Transverse colon (tissue), 4 donors: ENCODE measurements at regions of chr1 and their contacts with region 1.

Region 1: GRCh38 chr1:156659994-156660751 is 17.0 kb downstream of the NES start:
- DNase-seq: peak; percentile 94
- H3K4me3 ChIP-seq: peak overlapping the region in 2 of 4 donors; percentile 26 to 30
- H3K27ac ChIP-seq: peak overlapping the region; percentile 72 to 89 (median 87)
- H3K4me1 ChIP-seq: peaks cover 41 to 78% (median 68%) of the 10 kb centered on the region in 4 donors
- H3K27me3 ChIP-seq: no peaks in the 10 kb centered on the region
- CTCF ChIP-seq: peak; percentile 97 to 99 (median 98)
- EP300 ChIP-seq: no peak
- POLR2A ChIP-seq: peak; percentile 30

Region 2: GRCh38 chr1:156623946-156624813 is 36.0 kb before region 1 on chr1:
- in situ Hi-C with region 1: no loop called
- intact Hi-C with region 1: loop called (anchors 5 kb)
- DNase-seq: peak; percentile 47
- H3K4me3 ChIP-seq: peak overlapping the region in 3 of 4 donors; percentile 8 to 44 (median 32)
- H3K27ac ChIP-seq: no peak overlapping the region
- H3K4me1 ChIP-seq: peaks cover 16 to 25% (median 22%) of the 10 kb centered on the region in 4 donors
- H3K27me3 ChIP-seq: peaks cover 92% of the 10 kb centered on the region
- CTCF ChIP-seq: peak in 4 of 5 experiments; percentile 23 to 28 (median 27)
- EP300 ChIP-seq: no peak
- POLR2A ChIP-seq: no peak

Region 3: DNA sequence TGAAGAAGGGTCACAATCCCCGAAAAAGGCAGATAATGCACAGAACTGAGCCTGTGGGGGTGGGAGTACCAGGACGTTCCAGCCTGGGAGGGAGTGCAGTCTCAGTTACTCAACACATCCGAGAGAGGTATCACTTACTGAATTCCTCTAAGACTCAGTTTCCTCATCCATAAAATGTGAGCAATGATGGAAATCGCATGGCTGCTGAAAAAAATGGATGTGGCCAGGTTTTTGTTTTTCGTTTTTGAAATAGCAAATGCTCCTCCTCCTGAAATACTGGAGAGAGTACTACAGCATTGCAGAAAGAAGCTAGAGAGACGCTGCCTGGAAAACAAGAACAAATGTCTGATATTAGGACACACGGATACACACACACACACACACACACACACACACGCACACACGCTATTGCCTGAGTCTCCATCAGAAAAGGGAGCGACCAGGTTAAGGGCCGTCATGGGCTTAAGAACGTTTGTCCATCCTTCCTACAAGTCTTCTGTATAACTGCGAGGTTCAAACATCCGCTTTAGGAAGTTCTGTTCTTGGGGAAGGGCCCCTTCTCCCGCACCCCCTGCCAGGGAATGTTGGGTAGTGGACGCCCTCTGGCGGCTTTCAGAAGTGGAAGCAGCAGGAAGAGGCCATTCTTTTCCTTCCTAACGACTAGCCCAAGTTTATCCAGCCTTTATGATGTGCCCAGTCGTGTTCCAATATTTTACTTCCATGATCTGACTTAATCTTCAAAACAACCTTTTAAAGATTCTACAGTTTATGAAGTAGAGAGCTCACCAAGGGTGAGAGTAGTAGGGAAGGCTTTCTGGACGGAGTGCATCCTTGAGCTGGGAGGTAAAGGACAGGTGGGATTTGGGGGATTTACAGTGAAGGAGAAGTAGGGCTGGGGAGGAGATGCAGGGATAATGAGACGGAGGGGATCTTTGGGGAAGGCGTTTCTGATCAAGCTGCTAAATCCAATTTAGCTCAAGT is 17.7 kb after region 1 on chr1:
- in situ Hi-C with region 1: no loop called
- intact Hi-C with region 1: loop called (anchors 2 kb)
- DNase-seq: peak; percentile 56
- H3K4me3 ChIP-seq: peak overlapping the region in 3 of 4 donors; percentile 19 to 43 (median 36)
- H3K27ac ChIP-seq: peak overlapping the region; percentile 56 to 79 (median 69)
- H3K4me1 ChIP-seq: peaks cover 8 to 33% (median 26%) of the 10 kb centered on the region in 4 donors
- H3K27me3 ChIP-seq: peaks cover 77% of the 10 kb centered on the region
- CTCF ChIP-seq: peak; percentile 72 to 87 (median 80)
- EP300 ChIP-seq: no peak
- POLR2A ChIP-seq: no peak